Activated T-helper 1 cell treated with anti-CD3 and anti-CD28 coated beads, Interleukin-12 subunit alpha, Interleukin-12 subunit beta, Interleukin-2, Interleukin-4 antibody, amounts not matched to agents 30 ng/mL and 10 ng/mL and 1 ng/mL, durations not matched to agents 14 hours and 24 hours and 36 hours (primary cell): ENCODE measurements at regions of chr4 and their contacts with region 1.

Region 1: DNA sequence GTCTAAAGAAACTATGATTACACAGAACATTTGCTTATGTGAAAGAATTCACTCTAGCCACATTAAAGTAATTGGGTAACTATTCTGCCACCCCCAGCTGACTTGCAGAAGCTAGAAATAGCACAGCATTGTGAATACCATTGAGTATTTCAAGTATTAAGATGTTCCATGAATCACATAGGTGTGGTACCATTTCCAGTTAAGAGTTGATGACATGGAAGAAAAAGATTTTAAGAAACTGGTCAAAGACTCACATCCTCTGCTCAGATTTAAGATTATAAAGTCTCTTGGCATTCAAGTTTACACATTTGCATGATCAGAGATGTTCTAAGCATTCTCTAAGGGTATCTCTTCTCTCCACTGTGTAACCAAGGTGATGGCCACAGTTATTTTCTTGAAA is 287.5 kb downstream of the CAMK2D start:
- DNase-seq: no peak
- H3K4me3 Mint-ChIP-seq: no peak overlapping the region
- H3K27ac Mint-ChIP-seq: peak overlapping the region; percentile 82
- H3K4me1 Mint-ChIP-seq: peaks cover 39% of the 10 kb centered on the region
- H3K27me3 Mint-ChIP-seq: no peaks in the 10 kb centered on the region

Region 2: GRCh38 chr4:113446019-113446418 is 28.0 kb before region 1 on chr4:
- intact Hi-C with region 1: loop called (anchors 1 kb)
- DNase-seq: no peak
- H3K4me3 Mint-ChIP-seq: no peak overlapping the region
- H3K27ac Mint-ChIP-seq: peak overlapping the region; percentile 54
- H3K4me1 Mint-ChIP-seq: peaks cover 24% of the 10 kb centered on the region
- H3K27me3 Mint-ChIP-seq: no peaks in the 10 kb centered on the region

Region 3: GRCh38 chr4:113499696-113500095 is 25.7 kb after region 1 on chr4:
- intact Hi-C with region 1: no loop called
- DNase-seq: no peak
- H3K4me3 Mint-ChIP-seq: no peak overlapping the region
- H3K27ac Mint-ChIP-seq: no peak overlapping the region
- H3K4me1 Mint-ChIP-seq: peaks cover 20% of the 10 kb centered on the region
- H3K27me3 Mint-ChIP-seq: no peaks in the 10 kb centered on the region

Region 4: DNA sequence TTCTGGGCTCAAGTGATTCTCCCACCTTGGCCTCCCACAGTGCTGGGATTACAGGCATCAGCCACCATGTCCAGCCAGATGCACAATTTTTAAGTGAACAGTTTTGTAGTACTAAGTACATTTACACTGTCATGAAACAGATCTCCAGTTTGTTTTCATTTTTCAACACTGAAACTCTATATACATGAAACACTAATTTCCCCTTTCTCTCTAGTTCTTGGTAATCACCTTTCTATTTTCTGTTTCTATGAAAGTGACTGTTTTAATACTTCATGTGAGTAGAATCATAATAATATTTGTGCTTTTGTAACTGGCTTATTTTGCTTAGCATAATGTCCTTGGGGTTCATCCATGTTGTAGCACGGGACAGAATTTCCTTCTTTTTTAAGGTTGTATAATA is 50.1 kb after region 1 on chr4:
- intact Hi-C with region 1: loop called (anchors 2 kb)
- DNase-seq: no peak
- H3K4me3 Mint-ChIP-seq: peak overlapping the region; percentile 3
- H3K27ac Mint-ChIP-seq: peak overlapping the region; percentile 31
- H3K4me1 Mint-ChIP-seq: peaks cover 15% of the 10 kb centered on the region
- H3K27me3 Mint-ChIP-seq: no peaks in the 10 kb centered on the region